Breast epithelium (tissue), 4 donors: ENCODE measurements at regions of chr4 and their contacts with region 1.

Region 1: GRCh38 chr4:81471588-81472288 is at the start of gene RASGEF1B:
- DNase-seq: peak; percentile 79 to 90
- H3K4me3 ChIP-seq: peak within 1 kb of the TSS; percentile 81 to 95 (median 85)
- H3K27ac ChIP-seq: peak within 1 kb of the TSS; percentile 92 to 94
- H3K4me1 ChIP-seq: peaks cover 0 to 20% of the 10 kb centered on the region in 2 donors
- H3K27me3 ChIP-seq: no peaks in the 10 kb centered on the region
- CTCF ChIP-seq: no peak
- POLR2A ChIP-seq: peak; percentile 56
- total RNA-seq, gene RASGEF1B: 16.4 to 45.8 (median 25.0) TPM

Region 2: DNA sequence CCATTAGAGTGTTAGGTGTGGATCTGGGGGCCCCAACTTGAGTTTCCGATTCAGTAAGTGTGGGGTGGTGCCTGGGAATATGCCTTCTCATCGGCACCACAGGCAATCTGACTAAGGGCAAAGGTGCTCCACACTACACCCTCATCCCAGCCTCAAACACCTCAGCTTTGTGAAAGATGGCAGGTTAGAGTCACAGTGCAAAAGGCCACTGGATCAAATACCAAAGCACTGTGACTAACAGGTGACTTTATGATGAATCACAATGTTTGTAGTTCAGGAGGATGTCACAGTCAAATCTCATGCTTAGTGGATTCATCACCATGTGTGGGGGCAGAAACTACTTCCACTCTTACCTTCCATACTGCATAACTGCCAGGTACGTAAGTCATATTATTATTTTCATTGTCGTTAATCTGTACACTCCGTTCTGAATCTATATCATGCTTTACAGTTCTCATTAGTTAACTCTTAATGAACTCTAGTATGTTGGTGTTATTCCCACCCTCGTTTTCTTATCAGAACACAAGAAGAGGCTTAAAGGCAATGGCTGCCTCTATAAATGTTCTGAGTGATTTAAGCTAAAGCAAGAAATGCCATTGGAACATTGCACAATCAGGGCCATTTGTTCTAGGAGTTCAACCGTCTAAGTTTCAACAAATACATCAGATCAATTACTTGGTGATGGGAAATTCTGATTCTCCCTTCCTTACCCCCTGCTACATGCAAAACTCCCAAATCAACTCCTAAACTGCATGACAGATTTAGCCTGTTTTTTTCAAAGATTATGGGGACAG is 306.9 kb before region 1 on chr4:
- intact Hi-C with region 1: no loop called
- DNase-seq: no peak
- H3K4me3 ChIP-seq: no peak overlapping the region
- H3K27ac ChIP-seq: no peak overlapping the region
- H3K4me1 ChIP-seq: no peaks in the 10 kb centered on the region
- H3K27me3 ChIP-seq: no peaks in the 10 kb centered on the region
- CTCF ChIP-seq: no peak
- POLR2A ChIP-seq: no peak

Region 3: DNA sequence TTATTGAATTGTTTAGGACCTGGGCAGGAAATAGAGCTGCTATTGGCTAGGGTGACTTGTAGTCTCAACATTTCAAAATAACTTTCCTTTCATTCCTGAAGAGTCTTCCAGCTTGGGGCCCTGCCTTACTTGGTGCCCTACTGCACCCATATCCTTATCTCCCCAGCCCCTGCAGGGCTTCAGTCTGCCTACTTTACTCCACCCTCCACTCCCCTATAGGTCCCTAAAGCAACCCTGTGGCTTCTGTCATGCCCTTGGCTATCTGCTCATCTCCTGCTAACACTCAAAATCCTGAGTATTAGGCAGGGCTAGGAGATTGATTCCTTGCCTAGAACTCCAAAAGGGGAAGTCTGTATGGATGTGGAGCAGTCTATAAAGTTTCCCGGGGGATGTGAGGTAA is 199.1 kb before region 1 on chr4:
- intact Hi-C with region 1: no loop called
- DNase-seq: no peak
- H3K4me3 ChIP-seq: no peak overlapping the region
- H3K27ac ChIP-seq: no peak overlapping the region
- H3K4me1 ChIP-seq: no peaks in the 10 kb centered on the region
- H3K27me3 ChIP-seq: no peaks in the 10 kb centered on the region
- CTCF ChIP-seq: no peak
- POLR2A ChIP-seq: no peak

Region 4: GRCh38 chr4:81844717-81845116 is 373.0 kb after region 1 on chr4:
- intact Hi-C with region 1: loop called (anchors 10 kb)
- DNase-seq: peak; percentile 56 to 66
- H3K4me3 ChIP-seq: no peak overlapping the region
- H3K27ac ChIP-seq: no peak overlapping the region
- H3K4me1 ChIP-seq: no peaks in the 10 kb centered on the region
- H3K27me3 ChIP-seq: no peaks in the 10 kb centered on the region
- CTCF ChIP-seq: peak; percentile 53 to 77 (median 76)
- POLR2A ChIP-seq: no peak